ENCODE measurements at regions of chr4 and their contacts with region 1.

Region 1: GRCh38 chr4:120819805-120820437 is 102.6 kb downstream of the PRDM5 start:
- DNase-seq: no peak
- H3K4me3 Mint-ChIP-seq: no peak overlapping the region
- H3K27ac Mint-ChIP-seq: no peak overlapping the region
- H3K4me1 Mint-ChIP-seq: no peaks in the 10 kb centered on the region
- H3K27me3 Mint-ChIP-seq: peaks cover 8% of the 10 kb centered on the region

Region 2: GRCh38 chr4:120843849-120844527 is 24.1 kb after region 1 on chr4:
- intact Hi-C with region 1: loop called (anchors 2 kb)
- DNase-seq: no peak
- H3K4me3 Mint-ChIP-seq: no peak overlapping the region
- H3K27ac Mint-ChIP-seq: no peak overlapping the region
- H3K4me1 Mint-ChIP-seq: peaks cover 7% of the 10 kb centered on the region
- H3K27me3 Mint-ChIP-seq: peaks cover 2% of the 10 kb centered on the region

Region 3: GRCh38 chr4:120922381-120923206 is 102.7 kb after region 1 on chr4 and contains the start of gene PRDM5:
- intact Hi-C with region 1: loop called (anchors 5 kb)
- DNase-seq: peak; percentile 3
- H3K4me3 Mint-ChIP-seq: peak within 1 kb of the TSS; percentile 86
- H3K27ac Mint-ChIP-seq: peak within 1 kb of the TSS; percentile 60
- H3K4me1 Mint-ChIP-seq: peaks cover 11% of the 10 kb centered on the region
- H3K27me3 Mint-ChIP-seq: peaks cover 52% of the 10 kb centered on the region
- total RNA-seq, gene PRDM5: not detected in 2 replicates

Region 4: DNA sequence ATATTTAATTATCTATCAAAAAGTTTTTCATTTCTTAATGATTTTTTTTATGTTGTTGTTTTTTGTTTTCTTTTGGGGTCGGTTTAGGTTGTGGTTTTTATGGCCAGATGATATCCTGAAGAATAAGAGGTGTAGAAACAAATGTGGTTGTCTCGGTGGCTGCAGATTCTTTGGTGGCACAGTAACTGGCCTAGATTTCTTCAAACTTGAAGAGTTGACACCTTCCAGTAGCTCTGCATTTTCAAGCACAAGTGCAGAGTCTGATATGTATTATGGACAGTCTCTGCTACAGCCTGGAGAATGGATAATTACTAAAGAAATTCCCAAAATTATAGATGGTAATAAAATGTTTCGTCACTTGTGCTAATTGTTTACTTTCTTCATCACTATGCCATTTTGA is 1414.8 kb after region 1 on chr4:
- intact Hi-C with region 1: no loop called
- DNase-seq: no peak
- H3K4me3 Mint-ChIP-seq: no peak overlapping the region
- H3K27ac Mint-ChIP-seq: no peak overlapping the region
- H3K4me1 Mint-ChIP-seq: peaks cover 7% of the 10 kb centered on the region
- H3K27me3 Mint-ChIP-seq: no peaks in the 10 kb centered on the region

Measured in activated T-helper 1 cell treated with anti-CD3 and anti-CD28 coated beads, Interleukin-12 subunit alpha, Interleukin-12 subunit beta, Interleukin-2, Interleukin-4 antibody, amounts not matched to agents 30 ng/mL and 10 ng/mL and 1 ng/mL, durations not matched to agents 14 hours and 24 hours and 36 hours (primary cell).